H1 (cell line): ENCODE measurements at regions of chr5 and their contacts with region 1.

Region 1: GRCh38 chr5:172006321-172007174 is at the start of gene FBXW11:
- DNase-seq: peak; percentile 89 to 91
- H3K4me3 ChIP-seq: peak within 1 kb of the TSS; percentile 82 to 99 (median 96)
- H3K27ac ChIP-seq: peak within 1 kb of the TSS; percentile 98
- H3K4me1 ChIP-seq: peaks cover 13 to 34% (median 19%) of the 10 kb centered on the region in 4 experiments
- H3K27me3 ChIP-seq: no peaks in the 10 kb centered on the region
- CTCF ChIP-seq: no peak; a peak in 1 of 4 replicates
- EP300 ChIP-seq: no peak
- POLR2A ChIP-seq: peak; percentile 63 to 72
- RAD21 ChIP-seq: no peak
- total RNA-seq, gene FBXW11: 75.6 and 77.2 TPM in 2 replicates

Region 2: DNA sequence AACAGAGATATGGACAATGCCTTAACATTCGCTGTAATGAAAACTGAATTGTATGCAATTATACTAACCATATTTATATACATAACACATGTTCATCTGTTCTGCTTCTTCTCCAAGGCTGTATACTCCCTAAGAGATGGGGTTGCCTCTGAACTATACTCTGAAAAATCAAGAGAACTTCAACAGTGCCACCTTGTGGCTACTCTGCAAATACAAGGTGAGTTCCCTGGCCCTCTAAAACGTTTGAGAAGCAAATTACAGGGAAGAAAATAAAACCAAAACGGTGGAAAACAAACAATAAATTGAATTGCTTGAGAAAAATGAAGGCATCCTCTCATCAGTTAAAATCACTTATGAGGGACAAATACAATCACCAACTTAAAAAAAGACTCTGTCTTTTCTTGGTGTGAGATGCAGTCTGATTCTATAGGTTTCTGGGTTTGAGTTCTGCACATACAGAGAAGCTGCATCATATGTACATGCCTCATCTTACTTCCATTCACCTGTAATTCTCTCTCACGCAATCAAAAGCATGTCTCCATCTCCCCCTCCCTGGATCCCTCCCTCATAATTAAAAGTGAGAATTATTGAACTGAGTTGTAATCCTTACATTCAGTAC is 98.7 kb before region 1 on chr5:
- CTCF ChIA-PET with region 1: interaction called, 33 read pairs
- POLR2A ChIA-PET with region 1: interaction called, 17 read pairs
- DNase-seq: no peak
- H3K4me3 ChIP-seq: no peak overlapping the region
- H3K27ac ChIP-seq: no peak overlapping the region
- H3K4me1 ChIP-seq: peaks cover 0 to 4% (median 2%) of the 10 kb centered on the region in 4 experiments; a peak in 3 of 7 replicates
- H3K27me3 ChIP-seq: no peaks in the 10 kb centered on the region
- CTCF ChIP-seq: peak in 2 of 3 experiments; percentile 60 to 73; a peak in 3 of 4 replicates
- EP300 ChIP-seq: no peak
- POLR2A ChIP-seq: no peak
- RAD21 ChIP-seq: peak; percentile 67 to 74

Region 3: DNA sequence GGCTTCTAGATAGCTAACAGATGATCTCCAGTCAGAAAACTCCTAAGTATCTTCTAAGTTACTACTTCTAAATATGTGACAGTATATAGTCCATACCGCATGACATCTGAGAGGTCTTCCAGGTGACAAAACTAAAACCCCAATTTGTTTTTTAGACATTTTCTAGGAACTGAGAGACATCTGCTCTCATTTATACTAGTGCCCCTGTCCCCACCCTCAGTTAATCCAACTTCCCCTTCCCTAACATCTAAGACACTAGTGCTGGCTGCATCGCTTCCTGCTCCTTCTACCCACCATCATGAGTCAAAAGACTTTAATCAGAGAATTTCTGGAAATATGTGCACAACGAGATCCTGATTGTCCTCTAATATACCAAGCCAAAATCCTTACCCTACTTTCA is 38.0 kb before region 1 on chr5:
- CTCF ChIA-PET with region 1: interaction called, 4 read pairs
- POLR2A ChIA-PET with region 1: interaction called, 16 read pairs
- DNase-seq: no peak
- H3K4me3 ChIP-seq: no peak overlapping the region
- H3K27ac ChIP-seq: no peak overlapping the region
- H3K4me1 ChIP-seq: peaks cover 8 to 21% (median 10%) of the 10 kb centered on the region in 4 experiments; a peak in 4 of 7 replicates
- H3K27me3 ChIP-seq: no peaks in the 10 kb centered on the region
- CTCF ChIP-seq: no peak
- EP300 ChIP-seq: no peak
- POLR2A ChIP-seq: no peak
- RAD21 ChIP-seq: no peak

Region 4: DNA sequence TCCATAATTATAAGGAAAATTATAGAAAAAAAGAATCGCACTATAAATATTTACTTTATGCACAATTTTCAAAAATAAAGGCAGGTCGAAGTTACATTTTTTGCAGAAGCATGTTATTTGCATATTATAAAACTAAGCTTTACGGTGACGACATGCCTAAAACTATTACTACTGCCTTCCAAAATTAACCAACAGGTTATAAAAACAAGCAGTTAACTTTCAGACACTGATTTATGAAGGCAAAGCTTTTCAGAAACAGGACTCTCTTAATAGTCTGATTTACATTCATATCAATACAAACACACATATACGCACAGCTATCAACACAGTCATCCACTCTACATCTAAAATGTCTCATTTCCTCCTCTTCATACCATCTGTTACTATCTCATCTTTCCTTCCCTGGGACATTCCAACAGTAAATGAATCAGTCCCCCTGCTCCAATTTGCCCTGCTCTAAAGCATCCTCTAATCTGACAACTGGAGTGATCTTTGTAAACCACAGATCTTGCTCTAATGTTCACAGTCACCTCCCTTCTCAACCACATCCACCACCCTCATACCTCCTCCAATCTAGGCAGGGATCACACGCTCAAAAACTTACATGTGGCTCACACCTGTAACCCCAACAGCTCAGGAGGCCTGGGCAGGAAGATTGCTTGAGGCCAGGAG is 21.7 kb before region 1 on chr5:
- CTCF ChIA-PET with region 1: interaction called, 22 read pairs
- POLR2A ChIA-PET with region 1: interaction called, 66 read pairs
- DNase-seq: no peak
- H3K4me3 ChIP-seq: no peak overlapping the region
- H3K27ac ChIP-seq: 0 out of 2 replicates have a peak overlapping the region, but pooled peaks have one; percentile 4
- H3K4me1 ChIP-seq: peaks cover 5 to 34% (median 23%) of the 10 kb centered on the region in 4 experiments; a peak in 5 of 7 replicates
- H3K27me3 ChIP-seq: no peaks in the 10 kb centered on the region
- CTCF ChIP-seq: no peak
- EP300 ChIP-seq: no peak
- POLR2A ChIP-seq: no peak
- RAD21 ChIP-seq: no peak

Region 5: GRCh38 chr5:172044631-172045314 is 38.2 kb after region 1 on chr5:
- CTCF ChIA-PET with region 1: interaction called, 40 read pairs
- POLR2A ChIA-PET with region 1: interaction called, 9 read pairs
- DNase-seq: no peak
- H3K4me3 ChIP-seq: no peak overlapping the region
- H3K27ac ChIP-seq: no peak overlapping the region
- H3K4me1 ChIP-seq: peaks cover 0 to 10% (median 0%) of the 10 kb centered on the region in 4 experiments; a peak in 5 of 7 replicates
- H3K27me3 ChIP-seq: no peaks in the 10 kb centered on the region
- CTCF ChIP-seq: peak; percentile 24 to 40 (median 31); a peak in 3 of 4 replicates
- EP300 ChIP-seq: no peak
- POLR2A ChIP-seq: no peak
- RAD21 ChIP-seq: peak; percentile 64 to 72